Motor neuron (in vitro differentiated cells): ENCODE measurements at regions of chr2 and their contacts with region 1.

Region 1: DNA sequence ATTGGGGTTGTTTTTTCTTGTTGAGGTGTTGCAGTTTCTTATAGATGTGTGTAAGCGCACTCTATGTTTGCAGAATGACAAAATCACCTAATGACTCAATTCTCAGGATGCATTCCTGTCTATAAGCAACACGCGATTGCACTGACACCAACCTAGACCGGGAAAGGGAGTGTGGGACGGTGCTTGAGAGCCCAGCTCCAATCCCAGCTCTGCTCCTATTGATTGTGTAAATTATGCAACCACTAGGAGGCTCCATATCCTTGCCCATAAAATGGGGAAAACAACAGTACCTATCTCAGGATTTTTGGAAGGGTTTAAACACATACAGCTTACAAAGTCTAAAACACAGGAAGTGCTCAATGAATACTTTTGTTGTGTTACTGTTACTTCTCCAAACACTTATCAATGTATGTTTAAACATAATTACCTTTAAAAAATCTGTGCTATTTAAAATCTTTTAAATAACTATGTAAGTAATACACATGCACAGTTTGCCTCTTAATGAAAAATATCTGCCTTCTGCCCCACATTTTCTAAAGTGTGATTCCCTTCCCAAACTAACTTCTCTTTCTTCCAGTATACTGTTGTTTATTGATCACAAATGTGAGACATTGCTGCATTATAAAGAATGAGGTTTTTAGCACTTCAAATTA is 132.5 kb downstream of the SPHKAP start:
- ATAC-seq: peak; percentile 36 to 98 (median 60)
- H3K4me3 ChIP-seq: no peak overlapping the region
- H3K27ac ChIP-seq: no peak overlapping the region
- H3K4me1 ChIP-seq: no peaks in the 10 kb centered on the region

Region 2: GRCh38 chr2:229273723-229274338 is 1224.9 kb after region 1 on chr2:
- in situ Hi-C with region 1: loop called in 1 of 9 experiments (anchors 25 kb)
- ATAC-seq: peak; percentile 77 to 90 (median 81)
- H3K4me3 ChIP-seq: peak overlapping the region in 3 of 5 donors; percentile 11 to 19 (median 19)
- H3K27ac ChIP-seq: no peak overlapping the region
- H3K4me1 ChIP-seq: peaks cover 3 to 16% of the 10 kb centered on the region in 2 donors